RWPE1 (cell line): ENCODE measurements at regions of chr2 and their contacts with region 1.

Region 1: DNA sequence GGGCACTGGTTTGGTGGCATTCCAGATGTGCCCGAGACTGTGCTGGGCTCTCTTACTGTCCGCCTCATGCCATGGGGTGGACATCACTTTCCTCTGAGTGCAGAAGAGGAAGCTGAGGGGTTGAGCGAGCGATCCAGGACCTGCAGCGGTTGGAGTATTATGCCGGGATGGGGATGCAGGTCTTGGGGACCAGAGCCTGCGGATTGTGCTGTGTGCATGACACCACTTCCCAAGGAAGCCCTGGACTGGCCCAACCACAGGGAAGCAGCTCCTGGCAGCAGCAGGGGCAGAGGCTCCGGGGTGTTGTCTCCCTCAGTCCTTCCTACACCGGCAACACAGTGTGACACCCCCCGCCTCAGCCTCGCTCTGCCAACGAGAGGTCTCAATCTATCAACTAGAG is 44.5 kb downstream of the ATP6V1C2 start:
- DNase-seq: no peak
- H3K27ac ChIP-seq: no peak overlapping the region
- CTCF ChIP-seq: no peak

Region 2: DNA sequence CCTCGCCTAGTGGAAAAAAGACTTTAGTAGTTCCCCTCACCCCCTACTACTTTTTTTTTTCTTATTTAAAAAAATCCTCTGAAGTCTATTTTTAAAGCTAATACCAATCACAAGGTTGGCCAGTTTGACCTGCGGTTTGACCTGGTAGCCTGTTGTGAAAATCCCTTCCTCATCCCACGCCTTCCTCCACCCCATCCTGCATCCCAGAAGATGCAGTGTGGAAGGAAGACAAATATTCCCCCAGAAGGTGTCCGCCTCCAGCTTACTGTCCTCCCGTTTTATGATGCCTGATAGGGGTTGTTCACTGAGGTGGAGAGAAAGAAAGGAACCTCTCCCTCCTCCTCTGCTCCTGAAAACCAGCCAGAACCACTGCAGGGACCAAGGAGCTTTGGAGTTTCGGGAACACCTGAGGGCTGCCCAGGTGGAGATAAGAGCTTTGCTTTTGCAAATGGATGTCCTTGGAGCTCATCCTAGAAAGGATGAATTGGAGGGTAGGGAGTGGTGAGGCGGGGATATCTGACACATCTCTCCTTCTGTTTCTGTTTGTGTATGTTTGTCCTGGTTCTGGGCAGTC is 43.6 kb before region 1 on chr2:
- CTCF ChIA-PET with region 1: no interaction called
- POLR2A ChIA-PET with region 1: interaction called, 13 read pairs
- DNase-seq: no peak
- H3K27ac ChIP-seq: no peak overlapping the region
- CTCF ChIP-seq: no peak